Prostate gland (tissue), 2 donors: ENCODE measurements at regions of chr2 and their contacts with region 1.

Region 1: DNA sequence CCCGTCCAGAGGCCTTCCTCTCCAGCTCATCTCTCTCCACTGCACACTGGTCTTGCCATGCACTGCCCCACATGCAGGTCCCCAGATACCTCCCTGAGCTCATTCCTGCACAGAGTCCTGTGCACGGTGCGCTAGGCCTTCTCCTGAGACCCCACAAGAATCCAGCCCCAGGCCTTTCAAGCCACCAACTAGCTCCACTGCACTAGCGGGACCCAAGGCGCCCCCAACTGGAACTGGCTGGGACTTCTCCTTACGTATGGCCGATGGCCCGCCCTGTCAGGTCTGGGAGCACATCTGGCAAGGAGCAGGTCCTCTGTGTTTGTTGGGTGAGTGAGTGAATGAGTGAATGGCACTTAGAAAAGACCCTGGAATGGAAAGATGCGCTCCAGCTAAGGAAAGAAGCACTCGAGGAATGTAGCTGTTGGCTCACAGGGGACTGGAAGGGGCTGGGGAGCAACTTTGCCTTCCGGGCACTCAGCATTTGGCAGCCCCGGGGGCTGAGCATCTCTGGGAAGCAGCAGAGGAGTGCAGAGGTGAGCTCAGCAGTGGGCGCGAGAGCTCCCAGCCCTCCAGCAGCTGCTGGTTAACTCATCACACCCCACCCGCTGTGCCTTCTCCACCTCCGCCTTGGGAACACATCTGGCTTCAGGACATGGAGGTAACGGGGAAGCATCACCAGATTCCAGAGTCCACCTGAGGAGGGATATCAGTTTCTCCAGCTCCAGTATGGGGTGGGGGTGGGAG is 223.1 kb downstream of the GLI2 start:
- DNase-seq: no peak
- H3K4me3 ChIP-seq: no peak overlapping the region
- H3K27ac ChIP-seq: no peak overlapping the region
- H3K4me1 ChIP-seq: no peaks in the 10 kb centered on the region
- H3K27me3 ChIP-seq: no peaks in the 10 kb centered on the region
- CTCF ChIP-seq: no peak
- POLR2A ChIP-seq: no peak

Region 2: DNA sequence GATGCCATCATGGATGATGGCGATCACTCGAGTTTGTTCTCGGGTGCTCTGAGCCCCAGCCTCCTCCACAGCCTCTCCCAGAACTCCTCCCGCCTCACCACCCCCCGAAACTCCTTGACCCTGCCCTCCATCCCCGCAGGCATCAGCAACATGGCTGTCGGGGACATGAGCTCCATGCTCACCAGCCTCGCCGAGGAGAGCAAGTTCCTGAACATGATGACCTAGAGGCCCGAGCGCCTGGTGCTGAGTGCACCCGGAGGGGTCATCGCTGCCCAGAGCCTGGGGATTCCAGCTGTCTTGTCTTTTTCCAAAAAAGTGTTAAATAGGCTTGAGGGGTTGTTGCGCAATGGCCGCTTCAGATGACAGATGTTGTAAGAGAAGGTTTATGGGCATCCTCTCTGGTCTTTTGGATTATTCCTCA is 31.7 kb after region 1 on chr2:
- intact Hi-C with region 1: no loop called
- DNase-seq: no peak
- H3K4me3 ChIP-seq: no peak overlapping the region
- H3K27ac ChIP-seq: no peak overlapping the region
- H3K4me1 ChIP-seq: no peaks in the 10 kb centered on the region
- H3K27me3 ChIP-seq: no peaks in the 10 kb centered on the region
- CTCF ChIP-seq: no peak
- POLR2A ChIP-seq: no peak

Region 3: GRCh38 chr2:121076885-121077549 is 118.2 kb after region 1 on chr2:
- intact Hi-C with region 1: loop called (anchors 10 kb)
- DNase-seq: peak; percentile 46
- H3K4me3 ChIP-seq: no peak overlapping the region
- H3K27ac ChIP-seq: no peak overlapping the region
- H3K4me1 ChIP-seq: no peaks in the 10 kb centered on the region
- H3K27me3 ChIP-seq: no peaks in the 10 kb centered on the region
- CTCF ChIP-seq: peak; percentile 58 to 85 (median 66)
- POLR2A ChIP-seq: no peak